PC-9 (cell line): ENCODE measurements at regions of chr12 and their contacts with region 1.

Region 1: GRCh38 chr12:112725391-112725790 is 66.2 kb upstream of the RPH3A start:
- DNase-seq: no peak
- H3K4me3 ChIP-seq: no peak overlapping the region
- H3K27ac ChIP-seq: no peak overlapping the region
- H3K4me1 ChIP-seq: no peaks in the 10 kb centered on the region
- H3K27me3 ChIP-seq: peaks cover 40% of the 10 kb centered on the region
- CTCF ChIP-seq: no peak

Region 2: DNA sequence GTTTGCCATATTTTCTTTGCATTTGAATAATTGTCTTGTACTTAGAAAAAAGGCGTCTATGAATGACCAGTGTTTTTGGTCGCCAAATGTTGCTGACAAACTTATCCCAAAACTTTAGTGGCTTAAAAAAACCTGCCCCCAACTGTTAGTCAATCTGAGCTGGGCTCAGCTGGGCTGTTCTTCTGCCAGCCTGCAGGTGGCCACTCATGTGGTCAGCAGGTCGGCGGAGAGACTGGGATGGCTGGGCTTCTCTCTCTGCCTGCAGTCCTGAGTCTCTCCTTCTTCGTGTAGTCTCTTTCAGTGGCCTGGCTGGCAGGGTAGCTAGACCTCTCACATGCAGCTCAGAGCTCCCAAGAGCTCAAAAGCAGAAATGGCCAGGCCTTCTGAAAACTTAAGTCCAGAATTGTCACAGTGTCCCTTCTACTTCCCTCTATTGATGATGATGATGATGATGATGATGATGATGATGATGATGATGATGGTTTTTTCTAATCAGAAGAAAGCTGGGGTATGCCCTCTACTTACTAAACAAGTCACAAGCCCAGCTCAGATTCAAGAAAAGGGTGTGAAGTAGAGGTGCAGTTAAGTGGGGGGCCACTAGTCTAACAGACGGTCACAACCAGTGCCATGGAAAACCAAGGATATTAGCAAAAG is 218.8 kb before region 1 on chr12:
- CTCF ChIA-PET with region 1: no interaction called
- POLR2A ChIA-PET with region 1: no interaction called
- intact Hi-C with region 1: no loop called
- DNase-seq: no peak
- H3K4me3 ChIP-seq: no peak overlapping the region
- H3K27ac ChIP-seq: no peak overlapping the region
- H3K4me1 ChIP-seq: no peaks in the 10 kb centered on the region
- H3K27me3 ChIP-seq: no peaks in the 10 kb centered on the region
- CTCF ChIP-seq: 0 out of 2 replicates have a peak, but pooled peaks have one; percentile 31

Region 3: GRCh38 chr12:112822056-112822455 is 96.7 kb after region 1 on chr12:
- CTCF ChIA-PET with region 1: interaction called, 13 read pairs
- POLR2A ChIA-PET with region 1: no interaction called
- intact Hi-C with region 1: no loop called
- DNase-seq: no peak
- H3K4me3 ChIP-seq: no peak overlapping the region
- H3K27ac ChIP-seq: no peak overlapping the region
- H3K4me1 ChIP-seq: no peaks in the 10 kb centered on the region
- H3K27me3 ChIP-seq: peaks cover 84% of the 10 kb centered on the region
- CTCF ChIP-seq: no peak